GM13976 (cell line): ENCODE measurements at regions of chr12 and their contacts with region 1.

Region 1: GRCh38 chr12:23204933-23205778 is 580.2 kb downstream of the ETNK1 start:
- DNase-seq: peak; percentile 50
- CTCF ChIP-seq: peak; percentile 91

Region 2: GRCh38 chr12:23008623-23009022 is 196.5 kb before region 1 on chr12:
- in situ Hi-C with region 1: no loop called
- DNase-seq: no peak
- CTCF ChIP-seq: no peak

Region 3: GRCh38 chr12:23245186-23245585 is 40.0 kb after region 1 on chr12:
- in situ Hi-C with region 1: no loop called
- DNase-seq: no peak
- CTCF ChIP-seq: no peak

Region 4: GRCh38 chr12:23640754-23641153 is 435.6 kb after region 1 on chr12:
- in situ Hi-C with region 1: no loop called
- DNase-seq: no peak
- CTCF ChIP-seq: no peak

Region 5: DNA sequence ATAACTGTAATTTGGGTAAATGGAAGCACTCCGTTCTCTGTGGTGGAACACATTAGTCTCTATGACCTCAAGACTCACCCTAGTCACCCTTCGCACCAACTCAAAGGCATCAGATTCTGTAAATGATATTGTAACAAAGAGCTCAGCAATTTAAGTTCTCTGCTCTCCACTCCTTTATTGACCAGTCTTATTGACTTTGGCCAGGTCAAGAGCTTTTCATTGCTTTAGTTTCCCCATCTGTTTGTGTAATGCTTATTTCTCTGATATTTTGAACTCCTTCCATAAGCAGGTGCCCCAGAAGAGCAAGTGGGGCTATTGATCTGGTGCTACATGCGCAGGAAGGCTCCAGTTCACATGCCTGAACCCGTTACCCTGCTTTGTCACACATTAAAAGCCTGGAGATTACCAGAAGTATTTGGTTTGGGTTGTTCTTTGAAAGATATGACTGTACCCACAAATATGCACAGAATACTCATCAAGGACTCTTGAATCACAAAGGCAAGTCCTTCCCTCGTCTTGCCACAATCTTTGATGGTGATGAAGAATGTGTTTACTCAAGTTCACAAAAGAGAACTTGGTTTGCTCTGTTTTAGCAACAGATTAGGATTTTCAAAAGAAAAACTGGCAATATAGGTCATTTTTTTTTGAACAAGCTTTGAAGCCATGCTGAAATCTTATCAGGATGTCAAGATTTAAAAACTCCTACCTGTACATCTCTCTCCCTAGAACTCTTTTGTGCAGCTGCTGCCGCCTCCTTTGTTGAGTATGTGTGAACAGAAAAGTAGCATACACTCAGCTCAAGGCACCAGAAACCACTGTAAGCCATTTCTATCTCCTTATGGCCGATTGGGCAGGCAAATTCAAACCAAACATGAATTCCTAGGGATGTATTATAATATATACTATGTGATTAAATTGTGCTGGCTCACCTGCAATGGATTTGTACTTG is 1549.8 kb after region 1 on chr12:
- in situ Hi-C with region 1: loop called (anchors 25 kb)
- DNase-seq: no peak
- CTCF ChIP-seq: no peak